PC-3 (cell line): ENCODE measurements at regions of chr3 and their contacts with region 1.

Region 1: DNA sequence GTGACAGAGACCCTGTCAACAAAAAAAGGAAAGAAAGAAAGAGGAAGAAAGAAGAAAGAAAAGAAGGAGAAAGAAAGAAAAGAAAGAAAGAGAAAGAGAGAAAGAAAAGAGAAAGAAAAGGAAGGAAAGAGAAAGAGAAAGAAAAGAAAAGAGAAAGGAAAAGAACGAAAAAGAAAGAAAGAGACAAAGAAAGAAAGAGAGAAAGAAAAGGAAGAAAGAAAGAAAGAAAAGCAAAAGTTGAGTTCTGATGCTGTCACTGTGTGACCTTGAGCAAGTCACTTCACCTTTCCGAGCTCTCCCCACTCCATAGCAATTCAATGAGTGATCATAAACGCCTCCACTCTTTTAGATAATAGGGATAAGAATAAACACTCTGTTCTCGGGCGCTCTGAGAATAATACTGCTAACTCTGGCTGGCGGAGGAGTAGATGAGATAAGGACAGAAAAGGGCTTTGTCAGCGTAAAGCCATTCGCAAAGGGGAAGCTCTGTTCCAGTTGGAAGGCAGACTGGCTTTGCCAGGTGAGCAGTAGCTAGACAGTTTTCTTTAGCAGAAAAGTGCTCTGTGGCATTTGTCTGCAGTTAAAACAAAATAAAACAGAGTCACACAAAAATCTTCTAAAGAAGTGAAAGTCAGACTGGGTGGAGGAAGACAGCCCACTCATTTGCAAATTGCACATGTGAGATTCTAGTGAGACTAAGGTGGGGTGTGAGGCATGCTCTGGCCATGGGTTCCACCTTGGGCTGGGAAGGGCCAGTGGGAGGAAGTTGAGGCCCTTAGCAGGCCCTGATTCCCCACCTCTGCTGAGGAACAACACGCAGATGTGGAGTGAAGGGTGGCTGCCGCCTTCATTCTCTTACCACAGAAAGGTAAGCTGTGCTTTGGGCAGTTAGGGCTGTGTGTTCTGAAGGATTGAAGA is 9.6 kb upstream of the FLNB start:
- DNase-seq: peak; percentile 45
- ATAC-seq: peak; percentile 5
- H3K4me3 ChIP-seq: no peak overlapping the region
- H3K27ac ChIP-seq: peak overlapping the region; percentile 92
- H3K4me1 ChIP-seq: peaks cover 45% of the 10 kb centered on the region
- H3K27me3 ChIP-seq: no peaks in the 10 kb centered on the region
- CTCF ChIP-seq: no peak

Region 2: DNA sequence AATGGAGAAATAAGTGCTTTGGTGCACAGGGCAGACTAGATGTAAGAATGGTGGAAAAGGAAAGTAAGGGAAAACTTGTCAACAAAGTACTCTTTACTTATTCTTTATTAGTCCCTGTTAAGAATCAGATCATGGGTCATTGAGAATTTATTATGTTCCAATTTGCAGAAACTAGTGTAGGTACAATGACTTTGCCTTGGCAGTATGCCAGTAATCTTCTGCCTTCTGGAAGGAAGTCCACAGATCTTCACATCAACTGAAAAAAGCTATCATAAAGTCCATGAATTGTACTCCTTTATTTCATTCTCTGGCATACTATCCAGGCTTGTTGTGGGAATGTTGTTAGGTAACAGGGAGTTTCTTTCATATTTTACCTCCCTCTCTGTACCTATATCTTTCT is 78.6 kb before region 1 on chr3:
- CTCF ChIA-PET with region 1: no interaction called
- POLR2A ChIA-PET with region 1: interaction called, 21 read pairs
- intact Hi-C with region 1: no loop called
- DNase-seq: peak; percentile 34
- ATAC-seq: 0 out of 2 replicates have a peak, but pooled peaks have one; percentile 4
- H3K4me3 ChIP-seq: no peak overlapping the region
- H3K27ac ChIP-seq: no peak overlapping the region
- H3K4me1 ChIP-seq: peaks cover 26% of the 10 kb centered on the region
- H3K27me3 ChIP-seq: no peaks in the 10 kb centered on the region
- CTCF ChIP-seq: no peak